ENCODE measurements at regions of chr16 and their contacts with region 1.

Region 1: GRCh38 chr16:27313422-27314160 is at the start of gene IL4R:
- DNase-seq: peak; percentile 72 to 77
- H3K4me3 ChIP-seq: peak within 1 kb of the TSS; percentile 91
- H3K27ac ChIP-seq: peak within 1 kb of the TSS; percentile 98
- H3K4me1 ChIP-seq: peaks cover 46% of the 10 kb centered on the region
- H3K27me3 ChIP-seq: no peaks in the 10 kb centered on the region
- CTCF ChIP-seq: no peak
- total RNA-seq, gene IL4R: 65.3 and 76.5 TPM in 2 replicates

Region 2: DNA sequence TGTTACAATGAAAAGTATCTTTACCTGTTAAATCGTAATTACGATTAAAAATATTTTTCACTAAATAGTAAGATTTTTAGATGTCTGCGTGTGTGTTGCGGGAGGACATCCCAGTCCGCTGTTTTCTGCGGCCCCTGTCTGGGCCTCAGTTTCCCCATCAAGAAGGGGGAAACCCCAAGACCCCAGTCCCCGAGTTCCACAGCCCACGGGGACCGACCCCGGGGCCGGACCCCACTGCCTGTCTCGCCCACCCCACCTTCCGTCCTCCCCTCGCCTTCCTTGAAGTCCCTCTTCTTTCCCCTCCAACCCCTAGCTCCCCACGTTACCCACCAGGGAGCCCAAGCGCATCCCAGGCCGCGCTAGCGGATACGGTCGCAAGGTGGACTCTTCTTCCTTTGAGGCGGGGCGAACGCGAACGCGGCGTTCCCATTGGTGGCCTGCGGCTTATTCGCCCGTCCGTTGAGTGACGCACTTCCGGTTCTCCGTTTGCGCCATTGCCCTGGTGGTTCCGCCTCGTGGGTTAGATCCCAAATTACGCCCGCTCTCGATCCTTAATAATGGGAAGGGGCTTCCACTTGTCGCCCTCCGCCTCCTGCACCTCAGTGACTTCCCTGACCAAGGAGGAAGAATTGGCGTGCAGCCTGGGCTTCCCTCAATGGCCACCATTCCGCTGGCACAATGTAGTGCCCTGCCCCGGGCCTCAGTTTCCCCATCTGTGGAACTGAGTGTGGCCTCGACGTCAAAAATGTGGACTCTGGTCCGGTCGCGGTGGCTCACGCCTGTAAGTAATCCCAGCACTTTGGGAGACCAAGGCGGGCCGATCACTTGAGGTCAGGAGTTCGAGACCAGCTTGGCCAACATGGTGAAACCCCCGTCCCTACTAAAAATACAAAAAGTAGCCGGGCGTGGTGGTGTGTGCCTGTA is 45.0 kb before region 1 on chr16 and contains the start of gene NSMCE1:
- CTCF ChIA-PET with region 1: interaction called, 4 read pairs
- POLR2A ChIA-PET with region 1: interaction called, 10 read pairs
- intact Hi-C with region 1: loop called (anchors 1 kb)
- DNase-seq: peak; percentile 90 to 98
- H3K4me3 ChIP-seq: peak within 1 kb of the TSS; percentile 92
- H3K27ac ChIP-seq: peak within 1 kb of the TSS; percentile 78
- H3K4me1 ChIP-seq: peaks cover 43% of the 10 kb centered on the region
- H3K27me3 ChIP-seq: no peaks in the 10 kb centered on the region
- CTCF ChIP-seq: 0 out of 2 replicates have a peak, but pooled peaks have one; percentile 14
- total RNA-seq, gene NSMCE1: 114 and 121 TPM in 2 replicates

Region 3: DNA sequence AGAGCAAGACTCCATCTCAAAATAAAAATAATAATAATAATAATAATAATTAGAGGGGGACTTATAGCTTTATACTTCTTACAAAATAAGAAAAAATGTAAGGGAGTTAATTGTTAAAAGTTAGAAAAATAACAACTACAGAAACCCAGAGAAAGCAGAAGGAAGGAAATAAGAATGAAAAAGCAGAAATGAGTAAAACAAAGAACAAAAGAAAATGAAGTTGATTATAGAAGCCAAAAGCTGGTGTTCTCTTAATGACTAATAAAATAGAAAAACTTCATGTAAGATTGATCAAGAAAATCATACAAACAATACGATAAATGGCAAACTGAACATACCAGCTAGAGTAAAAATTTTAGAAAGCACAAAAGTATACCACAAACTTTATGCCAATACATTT is 38.2 kb before region 1 on chr16:
- CTCF ChIA-PET with region 1: no interaction called
- POLR2A ChIA-PET with region 1: interaction called, 12 read pairs
- intact Hi-C with region 1: no loop called
- DNase-seq: no peak
- H3K4me3 ChIP-seq: no peak overlapping the region
- H3K27ac ChIP-seq: no peak overlapping the region
- H3K4me1 ChIP-seq: no peaks in the 10 kb centered on the region
- H3K27me3 ChIP-seq: no peaks in the 10 kb centered on the region
- CTCF ChIP-seq: no peak

Region 4: DNA sequence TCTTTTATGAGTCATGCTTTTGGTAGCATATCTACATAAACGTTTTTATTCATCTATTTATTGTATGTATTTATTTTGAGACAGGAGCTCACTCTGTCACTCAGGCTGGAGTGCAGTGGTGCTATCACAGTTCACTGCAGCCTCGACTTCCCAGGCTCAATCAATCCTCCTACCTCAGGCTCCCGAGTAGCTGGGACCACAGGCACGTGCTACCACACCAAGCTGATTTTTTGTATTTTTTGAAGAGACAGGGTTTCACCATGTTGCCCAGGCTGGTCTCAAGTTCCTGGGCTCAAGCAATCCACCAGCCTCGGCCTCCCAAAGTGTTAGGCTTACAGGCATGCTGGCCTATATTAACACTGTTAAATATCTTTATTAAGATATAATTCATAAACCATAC is 20.2 kb before region 1 on chr16:
- CTCF ChIA-PET with region 1: no interaction called
- POLR2A ChIA-PET with region 1: interaction called, 13 read pairs
- intact Hi-C with region 1: no loop called
- DNase-seq: no peak
- H3K4me3 ChIP-seq: no peak overlapping the region
- H3K27ac ChIP-seq: no peak overlapping the region
- H3K4me1 ChIP-seq: no peaks in the 10 kb centered on the region
- H3K27me3 ChIP-seq: no peaks in the 10 kb centered on the region
- CTCF ChIP-seq: no peak

Region 5: GRCh38 chr16:27326738-27327585 is 13.4 kb after region 1 on chr16:
- CTCF ChIA-PET with region 1: interaction called, 4 read pairs
- POLR2A ChIA-PET with region 1: interaction called, 4 read pairs
- intact Hi-C with region 1: loop called (anchors 1 kb)
- DNase-seq: peak; percentile 97 to 99
- H3K4me3 ChIP-seq: peak overlapping the region; percentile 11; the same call in 1 of the 2 replicates
- H3K27ac ChIP-seq: peak overlapping the region; percentile 98
- H3K4me1 ChIP-seq: peaks cover 60% of the 10 kb centered on the region
- H3K27me3 ChIP-seq: no peaks in the 10 kb centered on the region
- CTCF ChIP-seq: 0 out of 2 replicates have a peak, but pooled peaks have one; percentile 34

Region 6: GRCh38 chr16:27449434-27450195 is 136.0 kb after region 1 on chr16:
- CTCF ChIA-PET with region 1: no interaction called
- POLR2A ChIA-PET with region 1: no interaction called
- intact Hi-C with region 1: no loop called
- DNase-seq: no peak
- H3K4me3 ChIP-seq: no peak overlapping the region
- H3K27ac ChIP-seq: no peak overlapping the region
- H3K4me1 ChIP-seq: no peaks in the 10 kb centered on the region
- H3K27me3 ChIP-seq: peaks cover 18% of the 10 kb centered on the region
- CTCF ChIP-seq: no peak

Measured in PC-9 (cell line).